Sciatic nerve (tissue), 2 donors: ENCODE measurements at regions of chr1 and their contacts with region 1.

Region 1: DNA sequence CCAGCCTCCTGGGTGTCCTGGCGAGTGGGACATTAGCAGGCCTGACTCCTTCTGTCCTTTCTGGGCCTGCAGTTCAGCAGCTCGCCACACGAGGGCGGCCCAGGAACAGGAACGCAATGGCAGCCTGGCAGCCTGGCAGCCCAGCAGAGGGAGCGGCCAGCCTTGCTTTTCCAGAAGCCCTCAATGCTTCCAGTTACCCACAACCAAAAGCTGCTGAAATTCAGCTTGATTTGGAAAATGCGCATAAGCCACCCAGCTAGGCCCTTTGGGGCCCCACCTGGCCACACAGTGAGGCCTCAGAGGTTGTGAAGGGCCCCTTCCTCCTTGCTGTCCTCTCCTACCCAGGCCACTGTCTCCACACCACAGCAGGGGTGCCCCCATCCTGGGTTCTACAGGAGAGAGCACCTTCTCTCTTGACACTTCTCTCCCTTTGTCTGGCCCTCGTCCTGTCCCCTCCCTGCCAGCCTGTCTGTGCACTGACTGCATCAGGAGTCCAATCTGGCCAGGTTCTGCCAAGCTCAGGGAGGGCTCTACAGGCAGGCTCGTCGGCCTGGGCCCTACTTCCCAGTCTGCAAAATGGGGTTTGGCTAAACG is 103.4 kb upstream of the VAMP3 start:
- DNase-seq: peak; percentile 95
- ATAC-seq: peak; percentile 77

Region 2: GRCh38 chr1:7265771-7266648 is 401.7 kb before region 1 on chr1:
- intact Hi-C with region 1: no loop called
- DNase-seq: no peak
- ATAC-seq: no peak

Region 3: DNA sequence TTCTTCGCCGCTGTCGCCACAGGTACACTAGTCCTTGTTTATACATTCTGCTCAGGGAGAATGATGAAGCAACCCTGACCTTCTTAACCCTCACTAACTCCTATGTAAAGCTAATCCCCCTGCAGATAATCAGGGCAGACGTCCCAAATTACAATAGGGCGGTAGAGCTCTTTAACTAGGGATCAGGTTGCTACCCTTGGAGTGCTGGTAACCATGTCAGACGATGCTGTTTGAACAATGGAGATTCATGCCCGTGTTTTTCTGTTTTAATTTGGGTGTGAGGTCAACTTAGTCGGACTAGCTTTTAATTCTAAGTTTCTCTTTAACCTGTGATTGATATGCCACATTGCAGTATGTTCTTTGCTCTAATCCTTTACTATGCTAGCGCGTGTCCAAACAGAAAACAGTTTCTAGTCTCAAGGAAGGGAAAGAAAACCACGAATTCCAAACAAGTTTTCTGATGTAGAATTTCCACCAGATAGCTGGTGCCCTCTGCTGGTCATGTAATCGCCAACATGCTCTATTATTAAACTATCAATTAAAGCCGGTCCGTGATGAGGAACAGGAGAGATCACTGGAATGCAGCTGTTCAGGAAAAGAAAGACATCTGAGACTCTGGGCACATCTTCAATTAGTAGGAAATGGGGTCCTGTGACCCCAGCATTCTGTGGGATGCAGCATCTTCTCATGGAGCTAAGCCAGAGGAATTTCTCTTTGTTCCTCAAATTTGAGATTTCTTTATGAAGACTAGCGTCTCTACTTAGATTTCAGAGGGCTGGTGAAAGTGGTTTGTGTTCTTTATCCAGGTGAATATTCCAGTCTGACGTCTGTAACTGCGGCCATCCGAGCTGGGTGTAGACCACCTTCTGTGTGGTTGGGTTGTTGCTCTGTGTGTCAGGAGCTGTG is 85.0 kb after region 1 on chr1:
- intact Hi-C with region 1: loop called (anchors 2 kb)
- DNase-seq: peak; percentile 79
- ATAC-seq: peak; percentile 82

Region 4: DNA sequence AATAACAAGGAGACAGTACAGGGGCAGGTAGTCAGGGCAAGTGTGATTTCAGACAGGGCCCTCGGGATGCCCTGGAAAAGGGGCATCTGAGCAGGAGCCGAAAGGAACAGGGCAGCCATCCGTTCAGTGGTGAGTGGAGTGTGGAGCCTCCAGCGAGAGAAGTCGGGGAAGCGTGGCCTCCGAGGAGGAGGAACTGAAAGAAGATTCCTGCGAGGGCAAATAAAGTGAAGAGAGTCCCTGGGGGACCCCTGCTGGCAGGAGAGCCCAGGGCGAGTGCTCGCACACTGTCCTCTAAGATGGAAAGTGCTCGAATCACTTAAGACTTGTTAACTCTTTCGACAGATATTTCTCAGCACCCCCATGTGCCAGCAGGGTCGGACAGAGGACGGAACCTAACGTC is 188.6 kb after region 1 on chr1:
- intact Hi-C with region 1: no loop called
- DNase-seq: no peak
- ATAC-seq: peak; percentile 48